ENCODE measurements at regions of chr2 and their contacts with region 1.

Region 1: GRCh38 chr2:37414470-37414949 is 70.1 kb downstream of the QPCT start:
- DNase-seq: peak in 4 of 5 donors; percentile 53 to 57 (median 57)
- H3K4me3 ChIP-seq: no peak overlapping the region
- H3K4me3 Mint-ChIP-seq: peak overlapping the region in 1 of 8 donors; percentile 27
- H3K27ac ChIP-seq: no peak overlapping the region
- H3K27ac Mint-ChIP-seq: no peak overlapping the region
- H3K4me1 ChIP-seq: peaks cover 7% of the 10 kb centered on the region
- H3K4me1 Mint-ChIP-seq: peaks cover 6 to 19% (median 13%) of the 10 kb centered on the region in 4 donors
- H3K27me3 ChIP-seq: no peaks in the 10 kb centered on the region
- H3K27me3 Mint-ChIP-seq: peaks cover 2 to 4% of the 10 kb centered on the region in 2 donors

Region 2: GRCh38 chr2:36731941-36732648 is 682.4 kb before region 1 on chr2:
- CTCF ChIA-PET with region 1: no interaction called
- POLR2A ChIA-PET with region 1: no interaction called
- intact Hi-C with region 1: no loop called
- DNase-seq: no peak
- H3K4me3 ChIP-seq: no peak overlapping the region
- H3K4me3 Mint-ChIP-seq: no peak overlapping the region
- H3K27ac ChIP-seq: no peak overlapping the region
- H3K27ac Mint-ChIP-seq: no peak overlapping the region
- H3K4me1 ChIP-seq: no peaks in the 10 kb centered on the region
- H3K4me1 Mint-ChIP-seq: no peaks in the 10 kb centered on the region
- H3K27me3 ChIP-seq: no peaks in the 10 kb centered on the region
- H3K27me3 Mint-ChIP-seq: peaks cover 1% of the 10 kb centered on the region in 2 donors

Region 3: DNA sequence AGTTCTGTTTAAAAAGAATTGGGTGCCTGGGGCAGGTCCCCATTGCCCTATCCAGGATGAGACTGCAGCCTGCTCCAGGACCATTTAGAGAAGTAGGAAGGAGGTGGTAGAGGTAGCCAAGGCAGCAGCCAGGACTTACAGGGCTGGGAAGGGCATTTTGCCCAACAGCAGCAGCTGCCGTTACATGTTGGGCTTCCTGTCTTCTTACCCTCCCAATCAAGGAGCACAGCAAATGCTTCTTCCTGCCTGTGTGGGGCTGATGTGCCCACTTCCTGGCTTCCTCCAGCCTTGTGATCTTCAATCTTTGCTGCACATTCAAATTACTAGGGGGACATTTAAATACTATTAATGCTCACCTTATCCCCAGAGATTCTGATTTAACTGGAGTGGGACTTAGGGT is 42.0 kb after region 1 on chr2:
- CTCF ChIA-PET with region 1: interaction called, 14 read pairs
- POLR2A ChIA-PET with region 1: no interaction called
- intact Hi-C with region 1: no loop called
- DNase-seq: peak; percentile 50 to 65 (median 60)
- H3K4me3 ChIP-seq: no peak overlapping the region
- H3K4me3 Mint-ChIP-seq: peak overlapping the region in 7 of 8 donors; percentile 43 to 83 (median 63)
- H3K27ac ChIP-seq: peak overlapping the region; percentile 43
- H3K27ac Mint-ChIP-seq: peak overlapping the region; percentile 72 to 90 (median 84)
- H3K4me1 ChIP-seq: peaks cover 89% of the 10 kb centered on the region
- H3K4me1 Mint-ChIP-seq: peaks cover 65 to 82% (median 76%) of the 10 kb centered on the region in 4 donors
- H3K27me3 ChIP-seq: no peaks in the 10 kb centered on the region
- H3K27me3 Mint-ChIP-seq: no peaks in the 10 kb centered on the region

Region 4: DNA sequence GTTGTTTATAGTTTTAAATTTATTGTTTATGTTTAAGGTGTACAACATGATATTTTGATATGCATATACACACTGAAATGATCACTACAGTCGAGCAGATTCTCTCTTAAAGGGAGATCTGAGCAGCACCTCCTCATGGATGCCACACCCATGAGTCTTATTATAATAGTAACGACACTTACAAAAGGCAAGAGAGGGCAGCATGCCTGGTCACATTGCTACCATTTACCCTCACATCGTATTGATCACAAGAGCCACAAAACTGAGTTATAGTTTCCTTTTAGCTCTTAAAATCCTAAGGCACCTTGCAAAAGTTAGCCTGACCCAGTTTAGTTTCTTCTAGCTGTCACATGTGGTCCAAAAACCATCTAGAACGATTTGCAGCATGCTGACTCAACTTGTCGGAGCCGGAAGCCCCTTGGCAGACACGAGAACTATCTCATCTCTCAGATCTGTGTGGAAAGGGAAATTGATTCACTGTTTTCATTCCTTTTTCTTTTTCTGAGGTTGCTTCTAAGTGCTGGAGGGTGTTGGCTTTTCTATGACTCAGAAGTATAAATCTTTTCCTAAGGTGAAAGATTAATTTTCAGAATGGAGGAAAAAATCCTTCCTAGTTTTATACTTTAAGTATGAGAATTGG is 171.6 kb after region 1 on chr2:
- CTCF ChIA-PET with region 1: interaction called, 18 read pairs
- POLR2A ChIA-PET with region 1: interaction called, 5 read pairs
- intact Hi-C with region 1: no loop called
- DNase-seq: peak; percentile 80 to 93 (median 86)
- H3K4me3 ChIP-seq: peak overlapping the region in 1 of 2 donors; percentile 7
- H3K4me3 Mint-ChIP-seq: peak overlapping the region; percentile 55 to 96 (median 80)
- H3K27ac ChIP-seq: peak overlapping the region; percentile 76
- H3K27ac Mint-ChIP-seq: peak overlapping the region; percentile 87 to 98 (median 94)
- H3K4me1 ChIP-seq: peaks cover 95% of the 10 kb centered on the region
- H3K4me1 Mint-ChIP-seq: peaks cover 77 to 95% (median 88%) of the 10 kb centered on the region in 4 donors
- H3K27me3 ChIP-seq: no peaks in the 10 kb centered on the region
- H3K27me3 Mint-ChIP-seq: no peaks in the 10 kb centered on the region

Region 5: GRCh38 chr2:37653805-37654378 is 239.4 kb after region 1 on chr2:
- CTCF ChIA-PET with region 1: interaction called, 26 read pairs
- POLR2A ChIA-PET with region 1: interaction called, 3 read pairs
- intact Hi-C with region 1: no loop called
- DNase-seq: no peak
- H3K4me3 ChIP-seq: no peak overlapping the region
- H3K4me3 Mint-ChIP-seq: peak overlapping the region in 7 of 8 donors; percentile 48 to 76 (median 70)
- H3K27ac ChIP-seq: peak overlapping the region; percentile 63
- H3K27ac Mint-ChIP-seq: peak overlapping the region; percentile 78 to 96 (median 89)
- H3K4me1 ChIP-seq: peaks cover 96% of the 10 kb centered on the region
- H3K4me1 Mint-ChIP-seq: peaks cover 80 to 98% (median 88%) of the 10 kb centered on the region in 4 donors
- H3K27me3 ChIP-seq: no peaks in the 10 kb centered on the region
- H3K27me3 Mint-ChIP-seq: no peaks in the 10 kb centered on the region

Region 6: GRCh38 chr2:37809525-37809924 is 395.0 kb after region 1 on chr2:
- CTCF ChIA-PET with region 1: interaction called, 7 read pairs
- POLR2A ChIA-PET with region 1: no interaction called
- intact Hi-C with region 1: loop called (anchors 1 kb)
- DNase-seq: peak in 4 of 5 donors; percentile 8 to 16 (median 10)
- H3K4me3 ChIP-seq: no peak overlapping the region
- H3K4me3 Mint-ChIP-seq: no peak overlapping the region
- H3K27ac ChIP-seq: no peak overlapping the region
- H3K27ac Mint-ChIP-seq: no peak overlapping the region
- H3K4me1 ChIP-seq: no peaks in the 10 kb centered on the region
- H3K4me1 Mint-ChIP-seq: peaks cover 4 to 6% (median 5%) of the 10 kb centered on the region in 4 donors
- H3K27me3 ChIP-seq: no peaks in the 10 kb centered on the region
- H3K27me3 Mint-ChIP-seq: peaks cover 0 to 4% of the 10 kb centered on the region in 2 donors